ENCODE measurements at regions of chr3 and their contacts with region 1.

Region 1: GRCh38 chr3:47791193-47791855 is 9.6 kb upstream of the SMARCC1 start:
- DNase-seq: no peak
- ATAC-seq: no peak
- H3K4me3 ChIP-seq: no peak overlapping the region
- H3K27ac ChIP-seq: no peak overlapping the region
- H3K4me1 ChIP-seq: peaks cover 8 to 19% of the 10 kb centered on the region in 2 experiments
- H3K27me3 ChIP-seq: no peaks in the 10 kb centered on the region
- CTCF ChIP-seq: no peak
- POLR2A ChIP-seq: no peak
- RAD21 ChIP-seq: no peak

Region 2: DNA sequence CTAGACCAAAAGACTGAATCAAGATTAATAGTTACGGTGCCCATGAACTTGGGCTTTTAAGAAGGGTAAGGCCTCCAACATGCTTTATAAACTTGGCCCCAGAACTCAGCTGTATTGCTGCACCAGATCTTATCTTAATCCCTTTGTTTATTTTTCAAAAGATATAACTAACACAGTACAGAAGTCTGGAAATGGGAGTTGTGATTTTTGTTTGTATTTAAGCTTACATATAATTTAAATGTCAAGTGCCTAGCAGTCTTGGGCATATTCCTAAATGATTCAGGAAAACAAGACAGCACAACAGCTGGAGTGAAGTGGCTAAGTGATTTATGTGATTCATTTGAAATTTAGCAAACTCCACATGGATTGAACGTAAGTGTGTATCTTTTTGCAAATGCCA is 755.7 kb before region 1 on chr3:
- CTCF ChIA-PET with region 1: no interaction called
- POLR2A ChIA-PET with region 1: no interaction called
- RAD21 ChIA-PET with region 1: no interaction called
- intact Hi-C with region 1: no loop called
- DNase-seq: no peak
- ATAC-seq: no peak
- H3K4me3 ChIP-seq: no peak overlapping the region
- H3K27ac ChIP-seq: no peak overlapping the region
- H3K4me1 ChIP-seq: no peaks in the 10 kb centered on the region
- H3K27me3 ChIP-seq: no peaks in the 10 kb centered on the region
- CTCF ChIP-seq: no peak
- POLR2A ChIP-seq: no peak
- RAD21 ChIP-seq: no peak

Region 3: DNA sequence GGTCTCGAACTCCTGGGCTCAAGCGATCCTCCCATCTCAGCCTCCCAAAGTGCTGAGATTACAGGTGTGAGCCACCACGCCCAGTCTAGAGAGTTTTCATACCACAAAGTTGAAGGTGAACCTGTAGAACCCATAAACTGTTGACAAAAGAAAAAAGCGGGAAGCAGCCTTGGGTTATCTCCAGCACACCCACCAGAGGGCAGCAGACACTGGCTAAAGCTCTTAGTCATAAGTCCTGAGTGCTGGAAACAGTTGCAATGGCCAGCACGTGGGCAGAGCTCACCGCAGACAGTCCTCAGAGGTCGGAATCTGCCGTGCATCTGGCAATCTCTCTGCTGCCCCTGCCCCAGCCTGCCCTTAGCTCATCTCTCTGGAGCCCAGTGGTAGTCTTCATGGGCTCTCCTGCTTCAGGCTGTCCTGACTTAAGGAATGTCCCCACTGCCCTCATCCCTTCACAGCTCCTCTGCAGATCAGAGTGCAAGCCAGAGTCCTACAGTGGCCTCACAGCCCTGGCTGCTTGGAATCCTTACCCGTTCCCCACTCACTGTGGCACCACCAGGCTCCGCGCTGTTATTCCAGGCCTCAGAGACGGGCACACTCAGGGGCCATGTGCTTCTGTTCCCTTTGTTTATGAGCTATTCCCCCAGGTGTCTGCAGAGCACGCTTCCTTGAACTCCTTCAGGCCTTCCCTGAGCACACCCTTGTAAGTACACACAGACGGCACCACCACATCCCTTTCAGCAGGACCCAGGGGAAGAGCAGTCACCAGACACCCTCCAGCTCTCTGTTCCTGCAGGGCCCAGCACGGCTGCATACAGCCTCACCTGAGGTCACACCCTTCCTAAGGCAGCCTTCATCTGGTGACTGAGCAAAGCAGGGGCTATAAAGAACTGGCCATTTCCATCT is 269.0 kb before region 1 on chr3:
- CTCF ChIA-PET with region 1: interaction called, 29 read pairs
- POLR2A ChIA-PET with region 1: interaction called, 9 read pairs
- RAD21 ChIA-PET with region 1: interaction called, 11 to 14 read pairs
- intact Hi-C with region 1: loop called (anchors 1 kb)
- DNase-seq: peak; percentile 91
- ATAC-seq: peak; percentile 92
- H3K4me3 ChIP-seq: no peak overlapping the region
- H3K27ac ChIP-seq: no peak overlapping the region
- H3K4me1 ChIP-seq: peaks cover 12 to 18% of the 10 kb centered on the region in 2 experiments
- H3K27me3 ChIP-seq: no peaks in the 10 kb centered on the region
- CTCF ChIP-seq: peak; percentile 79 to 96 (median 84)
- POLR2A ChIP-seq: no peak
- RAD21 ChIP-seq: peak; percentile 100

Region 4: DNA sequence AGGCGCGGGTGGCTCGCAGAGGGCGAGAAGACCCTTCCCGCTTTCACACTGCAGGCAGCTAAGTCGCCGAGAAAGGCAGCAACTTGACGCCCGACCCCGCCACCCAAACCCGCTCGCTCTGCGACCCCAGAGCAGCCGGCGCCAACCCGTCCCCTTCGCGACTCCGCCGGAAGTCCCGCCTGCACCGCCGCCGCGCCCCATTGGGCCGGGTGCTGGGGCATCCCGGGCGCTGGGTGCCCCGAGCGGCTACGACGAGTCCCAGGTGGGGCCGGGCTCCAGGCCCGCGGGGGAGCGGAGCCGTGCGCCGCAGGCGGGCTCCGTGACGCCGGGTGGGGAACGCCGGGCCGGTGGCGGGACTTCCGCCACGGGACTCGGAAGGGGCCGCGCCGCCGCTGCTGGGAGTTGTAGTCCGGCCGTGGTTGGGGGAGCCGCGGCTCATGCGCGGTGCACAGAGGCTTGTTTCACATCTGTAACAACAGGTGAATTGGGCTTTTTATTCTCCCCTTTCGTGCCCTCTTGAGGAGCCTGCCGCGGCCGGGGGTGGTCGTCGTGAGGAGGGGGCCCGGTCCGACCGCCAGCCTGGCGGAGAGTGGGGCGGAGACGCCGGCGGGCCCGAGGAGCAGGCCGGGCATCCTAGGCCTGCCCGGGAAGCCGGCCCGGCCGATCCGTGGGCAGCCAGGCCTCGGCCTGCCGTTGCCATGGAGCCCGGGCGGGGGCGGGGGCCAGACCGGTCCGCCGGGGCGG is 11.6 kb after region 1 on chr3 and contains the start of gene DHX30:
- CTCF ChIA-PET with region 1: interaction called, 4 read pairs
- POLR2A ChIA-PET with region 1: no interaction called
- RAD21 ChIA-PET with region 1: no interaction called
- intact Hi-C with region 1: loop called (anchors 1 kb)
- DNase-seq: no peak
- ATAC-seq: peak; percentile 85
- H3K4me3 ChIP-seq: peak within 1 kb of the TSS; percentile 67 to 74
- H3K27ac ChIP-seq: peak within 1 kb of the TSS; percentile 99
- H3K4me1 ChIP-seq: peaks cover 17 to 35% of the 10 kb centered on the region in 2 experiments
- H3K27me3 ChIP-seq: no peaks in the 10 kb centered on the region
- CTCF ChIP-seq: no peak
- POLR2A ChIP-seq: peak; percentile 65
- RAD21 ChIP-seq: no peak
- total RNA-seq, gene DHX30: 114 TPM

Measured in HCT116 (cell line).